ENCODE measurements at regions of chr14 and their contacts with region 1.

Region 1: GRCh38 chr14:78959674-78960264 is 789.6 kb downstream of the NRXN3 start:
- DNase-seq: peak; percentile 70
- H3K4me3 Mint-ChIP-seq: no peak overlapping the region
- H3K27ac Mint-ChIP-seq: no peak overlapping the region
- H3K4me1 Mint-ChIP-seq: no peaks in the 10 kb centered on the region
- H3K27me3 Mint-ChIP-seq: peaks cover 53% of the 10 kb centered on the region
- CTCF ChIP-seq: peak; percentile 76

Region 2: GRCh38 chr14:78974691-78975090 is 14.9 kb after region 1 on chr14:
- CTCF ChIA-PET with region 1: interaction called, 43 read pairs
- POLR2A ChIA-PET with region 1: no interaction called
- intact Hi-C with region 1: no loop called
- DNase-seq: peak; percentile 8
- H3K4me3 Mint-ChIP-seq: no peak overlapping the region
- H3K27ac Mint-ChIP-seq: no peak overlapping the region
- H3K4me1 Mint-ChIP-seq: no peaks in the 10 kb centered on the region
- H3K27me3 Mint-ChIP-seq: no peaks in the 10 kb centered on the region
- CTCF ChIP-seq: no peak

Measured in MCF 10A (cell line).